ENCODE measurements at regions of chr4 and their contacts with region 1.

Region 1: GRCh38 chr4:81574991-81575390 is 103.3 kb upstream of the RASGEF1B start:
- DNase-seq: no peak
- ATAC-seq: no peak
- H3K4me3 ChIP-seq: no peak overlapping the region
- H3K4me3 Mint-ChIP-seq: no peak overlapping the region
- H3K27ac ChIP-seq: no peak overlapping the region
- H3K27ac Mint-ChIP-seq: no peak overlapping the region
- H3K4me1 ChIP-seq: peaks cover 17 to 22% of the 10 kb centered on the region in 2 donors
- H3K4me1 Mint-ChIP-seq: peaks cover 27% of the 10 kb centered on the region
- H3K27me3 ChIP-seq: no peaks in the 10 kb centered on the region
- H3K27me3 Mint-ChIP-seq: no peaks in the 10 kb centered on the region
- CTCF ChIP-seq: no peak

Region 2: DNA sequence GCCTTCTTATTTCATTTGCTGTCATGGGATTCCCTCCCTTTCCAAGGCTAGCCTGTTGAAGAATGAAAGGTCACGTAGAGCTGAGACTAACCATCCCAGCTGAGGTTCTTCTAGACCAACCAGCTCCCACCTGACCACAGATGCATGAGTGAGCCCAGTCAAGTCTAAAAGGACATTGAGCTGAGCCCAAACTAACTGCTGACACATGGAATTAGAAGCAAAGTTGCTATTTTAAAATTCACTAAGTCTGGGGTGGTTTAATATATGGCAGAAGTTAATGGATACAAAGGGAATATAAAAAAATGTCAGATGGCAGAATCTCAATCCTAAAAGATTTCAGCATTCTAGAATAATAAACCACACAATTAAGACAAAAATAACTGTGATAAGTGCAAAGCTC is 15.6 kb after region 1 on chr4:
- CTCF ChIA-PET with region 1: interaction called, 3 read pairs
- POLR2A ChIA-PET with region 1: no interaction called
- intact Hi-C with region 1: loop called (anchors 2 kb)
- DNase-seq: no peak
- ATAC-seq: no peak
- H3K4me3 ChIP-seq: no peak overlapping the region
- H3K4me3 Mint-ChIP-seq: no peak overlapping the region
- H3K27ac ChIP-seq: no peak overlapping the region
- H3K27ac Mint-ChIP-seq: no peak overlapping the region
- H3K4me1 ChIP-seq: peaks cover 16 to 22% of the 10 kb centered on the region in 2 donors
- H3K4me1 Mint-ChIP-seq: peaks cover 49% of the 10 kb centered on the region
- H3K27me3 ChIP-seq: no peaks in the 10 kb centered on the region
- H3K27me3 Mint-ChIP-seq: no peaks in the 10 kb centered on the region
- CTCF ChIP-seq: no peak

Measured in B cell (primary cell).